ENCODE measurements at regions of chr2 and their contacts with region 1.

Region 1: GRCh38 chr2:200703127-200703925 is 108.4 kb upstream of the BZW1 start:
- DNase-seq: peak; percentile 53
- H3K4me3 Mint-ChIP-seq: no peak overlapping the region
- H3K27ac Mint-ChIP-seq: no peak overlapping the region
- H3K4me1 Mint-ChIP-seq: peaks cover 12% of the 10 kb centered on the region
- H3K27me3 Mint-ChIP-seq: peaks cover 16% of the 10 kb centered on the region
- CTCF ChIP-seq: peak; percentile 50

Region 2: GRCh38 chr2:199973703-199974102 is 729.6 kb before region 1 on chr2:
- CTCF ChIA-PET with region 1: interaction called, 5 read pairs
- intact Hi-C with region 1: loop called (anchors 1 kb)
- DNase-seq: no peak
- H3K4me3 Mint-ChIP-seq: no peak overlapping the region
- H3K27ac Mint-ChIP-seq: peak overlapping the region; percentile 48
- H3K4me1 Mint-ChIP-seq: peaks cover 48% of the 10 kb centered on the region
- H3K27me3 Mint-ChIP-seq: no peaks in the 10 kb centered on the region
- CTCF ChIP-seq: peak; percentile 53

Region 3: DNA sequence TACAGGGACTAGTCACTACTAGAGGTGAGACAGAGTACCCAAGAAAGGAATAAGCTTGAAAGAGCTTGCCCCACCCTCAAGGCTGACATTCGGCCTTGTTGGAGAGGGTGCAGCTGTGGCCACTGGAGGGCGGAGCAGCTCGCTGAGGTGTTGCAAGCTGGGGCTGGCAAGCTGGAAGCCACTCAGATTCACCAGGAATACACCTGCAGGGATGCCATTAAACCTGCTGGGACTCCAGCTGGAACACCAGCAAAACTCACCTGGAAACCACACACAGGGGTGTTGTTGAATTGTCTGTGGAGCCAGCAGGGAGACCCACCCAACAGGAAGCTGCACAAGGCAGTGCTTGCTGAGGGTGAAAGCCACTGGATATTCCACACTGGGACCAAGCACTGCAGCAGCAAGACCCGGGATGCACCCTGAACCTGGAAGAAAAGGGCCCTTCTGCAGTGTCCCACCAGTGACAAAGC is 219.6 kb before region 1 on chr2:
- CTCF ChIA-PET with region 1: interaction called, 6 read pairs
- intact Hi-C with region 1: loop called (anchors 1 kb)
- DNase-seq: peak; percentile 70
- H3K4me3 Mint-ChIP-seq: no peak overlapping the region
- H3K27ac Mint-ChIP-seq: no peak overlapping the region
- H3K4me1 Mint-ChIP-seq: peaks cover 37% of the 10 kb centered on the region
- H3K27me3 Mint-ChIP-seq: no peaks in the 10 kb centered on the region
- CTCF ChIP-seq: peak; percentile 62

Region 4: GRCh38 chr2:200585730-200586643 is 117.3 kb before region 1 on chr2 and contains the start of gene AOX1:
- CTCF ChIA-PET with region 1: interaction called, 7 read pairs
- intact Hi-C with region 1: loop called (anchors 2 kb)
- DNase-seq: peak; percentile 34
- H3K4me3 Mint-ChIP-seq: peak within 1 kb of the TSS; percentile 80
- H3K27ac Mint-ChIP-seq: no peak within 1 kb of the TSS
- H3K4me1 Mint-ChIP-seq: peaks cover 8% of the 10 kb centered on the region
- H3K27me3 Mint-ChIP-seq: peaks cover 20% of the 10 kb centered on the region
- CTCF ChIP-seq: no peak
- total RNA-seq, gene AOX1: 0.22 and 0.45 TPM in 2 replicates

Measured in Calu3 (cell line).